ENCODE measurements at regions of chr17 and their contacts with region 1.

Region 1: GRCh38 chr17:30291543-30292285 is at the start of gene BLMH:
- DNase-seq: peak; percentile 32 to 56
- ATAC-seq: peak; percentile 87 to 88
- H3K4me3 ChIP-seq: peak within 1 kb of the TSS; percentile 71 to 95 (median 84)
- H3K27ac ChIP-seq: peak within 1 kb of the TSS; percentile 64 to 71 (median 70)
- H3K4me1 ChIP-seq: peaks cover 12 to 17% of the 10 kb centered on the region in 2 donors
- H3K27me3 ChIP-seq: no peaks in the 10 kb centered on the region
- CTCF ChIP-seq: no peak
- POLR2A ChIP-seq: peak; percentile 59 to 65
- total RNA-seq, gene BLMH: 7.4 to 17.7 (median 16.7) TPM

Region 2: DNA sequence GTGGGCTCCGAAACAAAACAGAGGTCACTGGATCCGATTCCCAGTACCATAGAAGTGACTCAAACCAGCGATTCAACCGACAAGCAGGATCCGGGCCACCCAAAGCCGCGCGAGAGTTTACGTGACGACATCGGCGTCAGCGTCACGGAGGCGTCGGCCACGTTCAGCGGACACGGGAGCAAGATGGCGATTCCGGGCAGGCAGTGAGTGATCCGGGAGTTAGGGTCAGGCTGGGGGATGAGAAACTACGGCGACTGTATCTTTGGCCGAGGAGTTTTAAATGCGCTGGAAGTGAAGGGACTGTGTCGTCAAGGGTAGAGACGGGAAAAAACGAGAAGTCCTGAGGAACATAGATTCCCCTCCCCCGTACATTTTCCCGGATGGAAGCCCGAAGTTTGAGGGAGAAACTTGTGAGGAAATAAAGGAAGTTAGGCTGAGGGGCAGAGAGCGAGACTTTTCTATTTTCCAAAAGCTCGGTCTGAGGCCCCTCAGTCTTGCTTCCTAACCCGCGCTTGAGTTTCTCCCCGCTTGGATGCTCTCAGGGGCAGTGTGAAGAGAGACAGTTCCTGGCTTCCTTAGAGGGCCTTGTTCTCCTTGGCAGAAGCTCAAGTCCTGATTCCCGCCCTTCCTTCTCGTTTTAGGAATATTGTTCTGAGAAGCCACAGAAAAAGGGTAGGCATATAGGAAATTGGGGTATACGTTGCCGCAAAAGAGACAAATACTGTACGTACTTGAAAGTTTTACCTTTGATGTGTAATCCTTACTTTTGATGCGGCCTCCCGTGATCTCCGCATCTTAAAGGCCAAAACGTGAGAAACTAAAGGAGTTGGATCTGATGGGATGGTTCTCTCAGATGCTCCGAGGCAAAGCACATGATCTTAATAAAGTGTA is 174.8 kb before region 1 on chr17 and contains the start of gene NSRP1:
- in situ Hi-C with region 1: loop called in 1 of 4 experiments (anchors 25 kb)
- intact Hi-C with region 1: loop called (anchors 5 kb)
- DNase-seq: peak; percentile 89 to 92
- ATAC-seq: peak; percentile 97 to 99
- H3K4me3 ChIP-seq: peak within 1 kb of the TSS; percentile 65 to 91 (median 84)
- H3K27ac ChIP-seq: peak within 1 kb of the TSS; percentile 87 to 98 (median 96)
- H3K4me1 ChIP-seq: peaks cover 18 to 24% of the 10 kb centered on the region in 2 donors
- H3K27me3 ChIP-seq: no peaks in the 10 kb centered on the region
- CTCF ChIP-seq: no peak
- POLR2A ChIP-seq: peak; percentile 88 to 89
- total RNA-seq, gene NSRP1: 7.4 to 13.3 (median 11.0) TPM

Region 3: GRCh38 chr17:30244853-30245385 is 46.8 kb before region 1 on chr17:
- in situ Hi-C with region 1: no loop called
- intact Hi-C with region 1: no loop called
- DNase-seq: no peak
- ATAC-seq: no peak
- H3K4me3 ChIP-seq: no peak overlapping the region
- H3K27ac ChIP-seq: no peak overlapping the region
- H3K4me1 ChIP-seq: peaks cover 0 to 7% of the 10 kb centered on the region in 2 donors
- H3K27me3 ChIP-seq: peaks cover under 1 to 4% (median 1%) of the 10 kb centered on the region in 3 donors
- CTCF ChIP-seq: no peak
- POLR2A ChIP-seq: no peak

Region 4: DNA sequence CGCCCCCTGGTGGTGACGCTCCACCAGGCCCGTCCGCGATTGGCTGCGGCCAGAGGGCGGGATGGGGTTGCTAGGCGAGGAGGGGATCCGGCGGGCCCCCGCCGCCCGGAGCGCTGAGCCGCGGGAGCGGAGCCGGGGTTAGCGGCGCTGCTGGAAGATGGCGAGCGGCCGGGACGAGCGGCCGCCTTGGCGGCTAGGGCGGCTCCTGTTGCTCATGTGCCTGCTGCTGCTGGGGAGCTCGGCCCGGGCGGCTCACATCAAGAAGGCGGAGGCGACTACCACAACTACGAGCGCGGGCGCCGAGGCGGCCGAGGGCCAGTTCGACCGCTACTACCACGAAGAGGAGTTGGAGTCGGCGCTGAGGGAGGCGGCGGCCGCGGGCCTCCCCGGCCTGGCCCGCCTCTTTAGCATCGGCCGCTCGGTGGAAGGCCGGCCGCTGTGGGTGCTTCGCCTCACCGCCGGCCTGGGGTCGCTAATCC is 87.1 kb after region 1 on chr17 and contains the start of gene CPD:
- in situ Hi-C with region 1: no loop called
- intact Hi-C with region 1: loop called (anchors 5 kb)
- DNase-seq: peak; percentile 95 to 96
- ATAC-seq: peak; percentile 92 to 95
- H3K4me3 ChIP-seq: peak within 1 kb of the TSS; percentile 83 to 95 (median 90)
- H3K27ac ChIP-seq: peak within 1 kb of the TSS; percentile 86 to 93 (median 92)
- H3K4me1 ChIP-seq: peaks cover 37 to 43% of the 10 kb centered on the region in 2 donors
- H3K27me3 ChIP-seq: no peaks in the 10 kb centered on the region
- CTCF ChIP-seq: no peak
- POLR2A ChIP-seq: peak; percentile 89 to 93
- total RNA-seq, gene CPD: 20.8 to 32.4 (median 28.0) TPM